AG04449 (cell line): ENCODE measurements at regions of chr11 and their contacts with region 1.

Region 1: GRCh38 chr11:77127232-77127911 is 674 bp upstream of the MYO7A start:
- DNase-seq: no peak
- H3K4me3 ChIP-seq: peak overlapping the region; percentile 60
- CTCF ChIP-seq: peak; percentile 94

Region 2: DNA sequence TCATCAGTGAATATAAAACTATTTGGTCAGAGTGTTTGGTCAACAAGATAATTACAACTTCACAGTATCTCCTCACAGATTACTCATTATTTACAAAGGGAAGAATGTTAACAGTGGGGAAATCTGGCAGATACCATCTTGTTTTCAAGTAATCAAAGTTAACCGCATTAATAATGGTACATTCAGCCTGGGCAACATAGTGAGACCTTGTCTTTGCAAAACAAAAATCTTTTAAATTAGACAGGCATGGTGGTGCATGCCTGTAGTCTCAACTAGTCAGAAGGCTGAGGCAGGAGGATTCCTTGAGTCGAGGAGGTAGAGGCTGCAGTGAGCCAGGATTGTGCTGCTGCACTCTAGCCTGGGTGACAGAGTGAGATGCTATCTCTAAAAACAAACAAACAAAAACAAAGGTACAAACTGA is 188.2 kb before region 1 on chr11:
- CTCF ChIA-PET with region 1: no interaction called
- POLR2A ChIA-PET with region 1: no interaction called
- DNase-seq: no peak
- H3K4me3 ChIP-seq: no peak overlapping the region
- CTCF ChIP-seq: no peak

Region 3: DNA sequence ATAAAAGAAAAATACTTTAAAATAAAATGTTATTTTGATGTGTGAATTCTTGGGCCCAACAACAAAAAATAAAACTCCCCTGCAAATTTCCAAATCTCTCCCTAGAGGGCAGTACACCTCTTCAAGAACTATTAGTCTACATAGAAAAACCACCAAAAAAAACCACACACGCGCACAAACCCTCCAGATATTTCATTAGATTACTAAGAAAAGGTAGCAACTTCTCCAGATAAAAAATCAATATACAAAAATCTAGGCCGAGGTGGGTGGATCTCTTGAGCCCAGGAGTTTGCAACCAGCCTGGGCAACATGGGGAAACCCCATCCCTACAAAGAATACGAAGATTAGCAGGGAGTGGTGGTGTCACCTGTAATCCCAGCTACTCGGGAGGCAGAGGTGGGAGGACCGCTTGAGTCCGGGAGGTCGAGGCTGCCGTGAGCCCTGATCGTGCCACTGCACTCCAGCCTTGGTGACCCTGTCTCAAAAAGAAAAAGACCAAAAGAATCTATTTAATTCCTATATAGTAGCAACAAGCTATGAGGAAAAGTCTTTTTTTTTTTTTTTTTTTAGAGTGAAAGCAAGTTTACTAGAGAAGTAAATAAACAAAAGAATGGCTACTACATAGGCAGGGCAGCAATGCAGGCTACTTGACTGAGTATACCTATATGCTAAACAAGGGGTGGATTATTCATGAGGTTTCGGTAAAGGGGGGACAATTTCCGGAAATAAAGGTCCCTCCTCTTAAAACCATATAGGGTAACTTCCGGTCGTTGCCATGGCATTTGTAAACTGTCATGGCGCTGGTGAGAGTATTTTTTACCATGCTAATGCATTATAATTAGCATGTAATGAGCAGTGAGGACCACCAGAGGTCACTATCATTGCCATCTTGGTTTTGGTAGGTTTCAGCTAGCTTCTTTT is 80.1 kb before region 1 on chr11:
- CTCF ChIA-PET with region 1: interaction called, 18 read pairs
- POLR2A ChIA-PET with region 1: interaction called, 5 read pairs
- DNase-seq: peak; percentile 65
- H3K4me3 ChIP-seq: peak overlapping the region; percentile 52
- CTCF ChIP-seq: peak; percentile 48

Region 4: DNA sequence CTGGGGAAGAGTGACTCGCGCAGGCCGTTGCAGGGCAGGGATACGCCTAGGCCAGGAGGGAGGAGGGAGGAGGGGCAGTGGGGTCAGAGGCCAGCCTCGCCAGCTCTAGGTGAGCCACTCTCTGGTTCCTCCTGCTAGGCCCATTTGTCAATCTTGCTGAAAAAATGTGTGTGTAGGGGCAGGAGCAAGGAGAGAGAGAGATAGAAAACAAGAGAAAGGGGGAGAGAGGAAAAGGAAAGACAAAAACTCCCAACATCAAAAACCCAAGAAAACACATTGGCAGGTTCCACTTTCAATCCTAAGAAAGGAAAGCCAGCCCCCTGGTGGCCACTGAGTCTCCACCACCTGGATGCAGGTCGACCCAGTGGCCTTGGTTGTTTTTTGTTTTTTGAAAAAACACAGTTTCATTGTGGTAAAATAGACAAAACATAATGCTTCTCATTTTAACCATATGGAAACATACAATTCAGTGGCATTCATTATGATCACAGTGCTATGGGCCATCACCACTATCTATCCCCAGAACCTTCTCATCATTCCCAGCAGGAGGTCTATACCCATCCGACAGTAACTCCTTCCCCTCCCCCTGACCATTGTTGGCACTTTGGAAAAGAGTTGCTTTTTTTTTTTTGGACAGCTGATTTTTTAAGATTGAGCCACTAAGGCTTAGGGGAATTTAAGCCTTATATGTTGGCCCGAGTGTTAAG is 13.8 kb before region 1 on chr11:
- CTCF ChIA-PET with region 1: interaction called, 209 read pairs
- POLR2A ChIA-PET with region 1: no interaction called
- DNase-seq: no peak
- H3K4me3 ChIP-seq: no peak overlapping the region
- CTCF ChIP-seq: peak; percentile 58

Region 5: DNA sequence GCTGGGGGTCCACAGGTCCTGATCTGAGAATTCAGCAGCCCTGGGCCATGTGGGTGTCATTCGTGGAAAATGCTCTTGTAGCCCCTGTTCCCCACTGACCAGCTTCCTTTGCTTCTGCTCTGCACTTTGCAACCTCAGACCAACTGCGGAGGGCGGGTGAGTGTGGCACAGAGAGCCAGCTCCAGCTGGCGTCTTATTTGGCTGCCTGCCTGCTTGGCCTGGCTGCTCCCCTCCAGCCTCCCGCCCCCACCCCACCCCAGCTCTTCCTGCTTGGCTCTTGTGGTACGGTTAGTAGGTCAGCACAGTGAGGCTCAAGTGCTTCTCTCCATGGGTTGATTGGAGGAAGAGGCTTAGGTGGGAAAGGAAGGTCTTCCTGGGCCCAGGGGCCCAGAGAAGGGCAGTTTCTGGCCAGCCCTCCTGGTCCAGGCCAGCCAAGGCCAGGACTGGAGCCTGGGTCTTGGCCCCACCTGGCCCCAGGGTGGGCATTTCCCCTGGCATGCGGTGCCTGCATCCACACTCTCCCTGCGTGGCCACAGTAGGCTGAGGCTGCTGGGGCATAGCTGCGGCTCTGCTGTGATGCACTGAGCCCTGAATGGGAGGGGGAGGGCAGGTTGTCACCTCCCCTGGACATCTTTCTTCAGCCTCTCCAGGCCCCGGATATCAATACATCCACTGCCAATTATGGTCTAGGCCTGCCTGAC is 27.2 kb after region 1 on chr11:
- CTCF ChIA-PET with region 1: interaction called, 22 read pairs
- POLR2A ChIA-PET with region 1: no interaction called
- DNase-seq: no peak
- H3K4me3 ChIP-seq: no peak overlapping the region
- CTCF ChIP-seq: no peak

Region 6: DNA sequence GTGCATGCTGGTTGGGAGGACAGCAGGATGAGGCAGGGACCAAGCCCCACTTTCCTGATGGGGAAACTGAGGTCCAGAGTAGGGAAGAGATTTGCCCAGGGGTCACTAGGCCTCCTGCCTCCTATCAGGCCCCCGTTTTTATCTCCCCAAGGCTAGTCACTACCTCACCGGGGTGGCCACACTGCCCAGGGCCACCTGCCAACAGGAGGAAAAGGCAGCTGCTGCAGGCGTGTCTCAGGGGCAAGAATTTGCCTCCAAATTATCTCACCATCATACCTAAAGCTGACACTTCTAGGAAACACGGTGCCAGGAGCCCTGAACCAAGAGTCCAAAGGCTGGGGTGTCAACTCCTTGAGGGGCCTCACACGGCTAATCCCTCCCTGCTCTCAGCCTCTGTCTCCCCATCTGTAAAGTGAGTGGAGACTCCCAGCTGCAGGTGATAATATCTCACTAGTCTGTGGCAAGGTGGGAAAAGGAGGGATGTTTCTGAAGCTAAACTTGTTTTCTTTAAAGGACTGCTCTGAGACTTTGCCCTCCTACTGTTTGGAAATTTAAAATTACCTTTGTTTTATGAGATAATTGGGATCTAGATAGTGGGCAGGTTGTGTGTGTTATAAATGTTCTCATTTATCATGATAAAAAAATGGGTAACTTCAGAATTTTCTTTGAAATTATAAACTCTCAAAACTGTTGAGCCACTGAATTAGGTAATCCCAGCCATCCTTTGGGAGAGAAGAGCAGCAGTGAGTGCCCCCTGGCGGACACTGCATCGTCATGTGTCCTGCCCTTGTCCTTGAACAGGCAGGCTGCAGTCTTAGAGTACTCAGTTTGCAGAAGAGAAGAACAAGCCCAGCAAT is 60.6 kb after region 1 on chr11:
- CTCF ChIA-PET with region 1: interaction called, 194 read pairs
- POLR2A ChIA-PET with region 1: no interaction called
- DNase-seq: peak; percentile 21
- H3K4me3 ChIP-seq: no peak overlapping the region
- CTCF ChIP-seq: peak; percentile 86

Region 7: GRCh38 chr11:77217156-77217555 is 89.8 kb after region 1 on chr11:
- CTCF ChIA-PET with region 1: no interaction called
- POLR2A ChIA-PET with region 1: no interaction called
- DNase-seq: no peak
- H3K4me3 ChIP-seq: no peak overlapping the region
- CTCF ChIP-seq: no peak

Region 8: DNA sequence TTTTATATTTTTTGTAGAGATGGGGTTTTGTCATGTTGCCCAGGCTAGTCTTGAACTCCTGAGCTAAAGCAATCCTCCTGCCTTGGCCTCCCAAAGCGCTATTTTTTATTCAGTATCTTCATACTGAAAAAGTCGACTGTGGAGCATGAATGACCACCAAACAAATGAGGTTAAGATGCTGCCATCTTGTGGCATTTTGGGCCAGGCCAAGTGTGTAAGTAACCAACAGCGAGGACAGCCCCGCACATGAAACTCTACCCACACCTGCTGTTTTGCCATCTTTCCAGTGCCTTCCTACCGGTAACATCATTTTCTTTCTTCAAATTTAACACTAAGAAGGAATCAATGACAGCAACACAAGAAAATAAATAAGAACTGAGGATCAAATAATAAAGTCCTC is 430.2 kb after region 1 on chr11:
- CTCF ChIA-PET with region 1: interaction called, 13 read pairs
- POLR2A ChIA-PET with region 1: no interaction called
- DNase-seq: no peak
- H3K4me3 ChIP-seq: no peak overlapping the region
- CTCF ChIP-seq: no peak